ENCODE measurements at regions of chr12 and their contacts with region 1.

Region 1: DNA sequence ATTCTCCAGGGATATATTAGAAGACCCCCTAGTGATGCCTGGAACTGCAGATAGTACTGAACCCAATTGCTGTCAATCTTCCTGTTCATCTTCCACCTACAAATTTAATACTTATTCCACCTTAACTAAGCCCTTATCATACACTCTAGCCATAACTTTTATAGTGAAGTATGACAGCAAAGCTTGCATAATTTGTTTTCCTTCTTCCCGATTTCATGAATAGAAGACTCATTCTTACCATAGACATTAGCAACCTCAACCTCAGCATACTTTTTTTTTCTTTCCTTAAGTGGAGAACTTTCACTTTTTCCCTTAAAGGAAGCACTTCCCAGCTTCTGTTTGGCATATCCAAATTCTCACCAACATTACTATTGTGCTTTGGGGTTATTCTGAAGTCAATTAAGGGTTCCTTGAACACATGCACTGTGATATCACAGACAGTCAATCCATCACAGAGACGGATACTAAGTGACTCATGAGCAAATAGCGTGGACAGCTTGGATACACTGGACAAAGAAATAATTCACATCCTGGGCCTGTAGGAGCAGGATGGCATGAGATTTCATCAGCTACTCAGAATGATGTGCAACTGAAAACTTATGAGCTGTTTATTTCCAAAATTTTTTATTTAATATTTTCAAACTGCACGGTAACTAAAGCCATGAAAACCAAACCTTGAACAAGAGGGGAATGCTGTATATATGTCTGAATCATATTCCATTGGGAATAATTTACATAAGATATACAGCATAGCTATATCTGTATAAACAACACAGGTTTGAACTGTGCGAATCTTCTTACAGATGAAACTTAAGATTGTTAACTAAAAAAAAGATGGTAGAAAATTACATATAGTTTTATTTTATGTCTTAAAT is 63.9 kb downstream of the SYT1 start:
- DNase-seq: no peak
- ATAC-seq: no peak

Region 2: GRCh38 chr12:79019672-79020071 is 91.2 kb after region 1 on chr12:
- intact Hi-C with region 1: loop called (anchors 5 kb)
- DNase-seq: no peak
- ATAC-seq: no peak

Measured in sciatic nerve (tissue), 2 donors.